Heart right ventricle (tissue), 16 donors: ENCODE measurements at regions of chr9 and their contacts with region 1.

Region 1: DNA sequence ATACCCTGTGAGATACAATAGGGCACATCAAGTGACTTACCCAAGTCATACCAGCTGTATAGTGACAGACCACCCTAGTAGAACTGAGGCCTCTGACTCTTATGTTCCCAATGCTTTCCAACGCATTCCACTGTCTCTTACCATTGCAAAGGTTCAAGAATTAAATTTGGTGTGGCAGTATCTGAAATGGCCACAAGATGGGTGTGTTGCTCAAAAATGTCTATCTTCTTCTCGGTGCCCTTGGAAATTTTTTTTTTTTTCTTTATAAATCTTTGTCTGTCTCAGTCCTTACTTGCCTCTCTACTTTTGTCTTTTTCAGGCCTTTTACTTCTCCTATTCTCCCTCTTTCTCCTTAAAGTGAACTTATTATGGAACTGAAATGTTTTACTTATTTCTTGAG is 48.4 kb downstream of the GPR21 start:
- DNase-seq: no peak
- ATAC-seq: peak in 1 of 8 donors; percentile 41
- H3K4me3 ChIP-seq: no peak overlapping the region
- H3K27ac ChIP-seq: no peak overlapping the region
- H3K4me1 ChIP-seq: peaks cover 0 to 3% (median 0%) of the 10 kb centered on the region in 9 donors
- H3K27me3 ChIP-seq: no peaks in the 10 kb centered on the region
- CTCF ChIP-seq: peak in 8 of 9 donors; percentile 11 to 63 (median 51)

Region 2: DNA sequence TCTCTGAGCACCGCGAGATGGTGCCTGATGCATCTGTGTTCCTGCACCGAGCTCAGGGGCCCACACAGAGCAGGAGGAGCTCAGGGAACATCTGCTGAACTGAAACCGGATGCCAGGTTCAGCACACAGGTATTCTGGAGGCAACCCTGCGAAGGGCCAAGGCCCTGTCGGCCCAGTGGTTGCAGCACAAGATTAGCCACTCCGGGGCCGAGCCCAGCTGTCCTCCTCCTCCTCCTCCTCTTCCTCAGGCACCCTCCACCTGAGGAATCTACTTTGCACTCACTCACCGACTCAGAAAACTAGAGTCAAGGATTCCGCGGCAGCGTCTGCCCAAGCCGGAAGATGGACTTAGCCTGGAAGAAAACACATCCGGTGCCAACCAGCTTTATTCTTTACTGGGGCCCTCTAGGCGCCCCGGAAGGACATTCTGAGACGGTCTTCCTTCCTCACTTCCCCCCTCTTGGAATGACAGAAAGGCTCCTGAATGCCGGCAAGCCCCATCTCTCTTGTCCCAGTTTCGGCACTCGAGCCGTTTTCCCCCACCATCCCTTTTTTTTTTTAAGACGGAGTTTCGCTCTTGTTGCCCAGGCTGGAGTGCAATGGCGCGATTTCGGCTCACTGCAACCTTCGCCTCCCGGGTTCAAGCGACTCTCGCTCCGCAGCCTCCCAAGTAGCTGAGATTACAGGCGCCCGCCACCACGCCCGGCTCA is 168.7 kb before region 1 on chr9 and contains the start of gene ZBTB6:
- intact Hi-C with region 1: no loop called
- DNase-seq: peak; percentile 52 to 80
- ATAC-seq: peak; percentile 95 to 100 (median 99)
- H3K4me3 ChIP-seq: peak within 1 kb of the TSS; percentile 45 to 91 (median 84)
- H3K27ac ChIP-seq: peak within 1 kb of the TSS; percentile 57 to 92 (median 84)
- H3K4me1 ChIP-seq: peaks cover 4 to 24% (median 18%) of the 10 kb centered on the region in 9 donors
- H3K27me3 ChIP-seq: no peaks in the 10 kb centered on the region
- CTCF ChIP-seq: no peak
- total RNA-seq, gene ZBTB6: 4.3 to 7.0 (median 6.0) TPM

Region 3: DNA sequence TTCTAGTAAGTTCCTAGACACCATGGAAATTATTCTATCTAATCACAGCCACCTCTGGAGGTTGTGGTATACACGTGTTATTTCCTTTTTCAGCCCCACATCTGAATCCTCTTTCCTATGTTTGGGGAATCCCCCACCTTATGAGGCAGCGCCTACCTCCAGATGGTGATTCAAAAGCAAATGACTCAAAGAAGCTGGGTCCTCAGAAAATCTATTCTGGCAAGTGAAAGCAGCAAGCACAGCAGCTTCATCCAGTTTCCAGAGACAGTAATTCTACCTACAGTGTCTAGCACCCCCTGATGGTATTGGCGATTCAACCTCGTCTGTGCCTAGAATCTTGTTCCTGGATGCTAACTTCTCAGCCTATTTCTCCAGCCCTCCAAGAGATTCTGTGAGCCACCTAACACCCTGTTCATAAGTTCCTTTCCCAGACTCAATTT is 143.6 kb after region 1 on chr9:
- intact Hi-C with region 1: loop called in 4 of 10 experiments (anchors 10 kb)
- DNase-seq: peak in 1 of 2 donors; percentile 14
- ATAC-seq: peak in 4 of 8 donors; percentile 37 to 70 (median 63)
- H3K4me3 ChIP-seq: no peak overlapping the region
- H3K27ac ChIP-seq: no peak overlapping the region
- H3K4me1 ChIP-seq: peaks cover 0 to 23% (median 0%) of the 10 kb centered on the region in 9 donors
- H3K27me3 ChIP-seq: no peaks in the 10 kb centered on the region
- CTCF ChIP-seq: peak in 7 of 9 donors; percentile 36 to 60 (median 53)